Testis (tissue), 5 donors: ENCODE measurements at regions of chr7 and their contacts with region 1.

Region 1: GRCh38 chr7:51162724-51163329 is 153.8 kb downstream of the COBL start:
- DNase-seq: peak; percentile 93
- H3K4me3 ChIP-seq: no peak overlapping the region
- H3K27ac ChIP-seq: no peak overlapping the region
- H3K4me1 ChIP-seq: no peaks in the 10 kb centered on the region
- H3K27me3 ChIP-seq: no peaks in the 10 kb centered on the region
- CTCF ChIP-seq: peak; percentile 75 to 82 (median 75)
- POLR2A ChIP-seq: no peak

Region 2: DNA sequence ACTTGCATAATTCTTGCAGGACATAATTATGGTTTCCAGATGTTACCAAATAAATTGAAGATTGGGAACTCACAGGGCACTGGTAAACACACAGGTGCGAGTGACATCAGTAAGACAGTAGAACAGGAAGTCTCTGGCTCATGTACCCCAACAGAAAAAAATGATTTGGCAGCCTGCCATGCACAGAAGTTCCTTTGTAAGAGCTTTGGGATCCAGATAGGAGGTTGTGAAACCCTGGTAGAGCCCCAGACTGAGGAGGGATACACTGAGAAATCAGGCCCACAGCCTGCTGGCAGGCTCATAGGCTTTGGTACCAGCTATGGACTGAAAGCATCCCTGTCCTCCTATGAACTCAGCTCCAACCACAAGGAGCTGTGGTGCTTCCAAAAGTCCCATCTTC is 35.8 kb after region 1 on chr7:
- intact Hi-C with region 1: no loop called
- DNase-seq: no peak
- H3K4me3 ChIP-seq: no peak overlapping the region
- H3K27ac ChIP-seq: no peak overlapping the region
- H3K4me1 ChIP-seq: no peaks in the 10 kb centered on the region
- H3K27me3 ChIP-seq: no peaks in the 10 kb centered on the region
- CTCF ChIP-seq: no peak
- POLR2A ChIP-seq: no peak

Region 3: GRCh38 chr7:51308265-51308664 is 145.4 kb after region 1 on chr7:
- intact Hi-C with region 1: no loop called
- DNase-seq: no peak
- H3K4me3 ChIP-seq: no peak overlapping the region
- H3K27ac ChIP-seq: no peak overlapping the region
- H3K4me1 ChIP-seq: no peaks in the 10 kb centered on the region
- H3K27me3 ChIP-seq: no peaks in the 10 kb centered on the region
- CTCF ChIP-seq: no peak
- POLR2A ChIP-seq: no peak

Region 4: DNA sequence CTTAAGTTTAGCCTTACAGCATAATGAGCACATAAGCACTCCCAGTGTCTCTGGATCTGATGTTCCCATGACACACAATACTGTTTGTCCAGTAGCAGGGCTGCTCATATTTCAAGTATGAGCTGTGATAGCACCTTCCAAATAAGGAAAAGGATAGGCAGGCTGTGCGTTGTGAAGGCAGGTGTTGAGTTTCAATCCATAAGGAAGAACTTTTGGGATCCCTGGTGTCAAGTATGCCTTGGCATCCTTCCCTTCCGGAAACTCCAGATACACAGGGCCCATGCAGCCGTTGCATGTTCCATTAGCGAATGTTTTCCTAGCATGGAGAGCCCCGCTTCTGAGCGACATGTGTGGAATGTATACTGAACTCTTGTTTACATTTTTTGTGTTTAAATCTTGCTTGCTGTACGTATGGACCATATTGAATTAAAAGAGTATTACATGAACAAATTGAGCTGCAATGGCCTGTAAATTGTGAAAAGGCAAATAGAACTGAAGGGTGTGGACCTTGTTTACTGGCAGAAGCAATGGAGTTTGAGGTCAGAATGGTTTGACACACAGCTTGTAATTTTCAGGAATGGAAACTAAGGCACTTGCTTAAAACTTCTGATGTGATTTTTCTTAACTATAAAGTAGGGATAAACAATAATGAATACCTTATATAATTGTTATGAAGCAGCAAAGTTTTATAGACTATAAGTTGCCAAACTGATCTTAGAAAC is 187.5 kb after region 1 on chr7:
- intact Hi-C with region 1: no loop called
- DNase-seq: no peak
- H3K4me3 ChIP-seq: no peak overlapping the region
- H3K27ac ChIP-seq: no peak overlapping the region
- H3K4me1 ChIP-seq: no peaks in the 10 kb centered on the region
- H3K27me3 ChIP-seq: no peaks in the 10 kb centered on the region
- CTCF ChIP-seq: no peak
- POLR2A ChIP-seq: no peak

Region 5: DNA sequence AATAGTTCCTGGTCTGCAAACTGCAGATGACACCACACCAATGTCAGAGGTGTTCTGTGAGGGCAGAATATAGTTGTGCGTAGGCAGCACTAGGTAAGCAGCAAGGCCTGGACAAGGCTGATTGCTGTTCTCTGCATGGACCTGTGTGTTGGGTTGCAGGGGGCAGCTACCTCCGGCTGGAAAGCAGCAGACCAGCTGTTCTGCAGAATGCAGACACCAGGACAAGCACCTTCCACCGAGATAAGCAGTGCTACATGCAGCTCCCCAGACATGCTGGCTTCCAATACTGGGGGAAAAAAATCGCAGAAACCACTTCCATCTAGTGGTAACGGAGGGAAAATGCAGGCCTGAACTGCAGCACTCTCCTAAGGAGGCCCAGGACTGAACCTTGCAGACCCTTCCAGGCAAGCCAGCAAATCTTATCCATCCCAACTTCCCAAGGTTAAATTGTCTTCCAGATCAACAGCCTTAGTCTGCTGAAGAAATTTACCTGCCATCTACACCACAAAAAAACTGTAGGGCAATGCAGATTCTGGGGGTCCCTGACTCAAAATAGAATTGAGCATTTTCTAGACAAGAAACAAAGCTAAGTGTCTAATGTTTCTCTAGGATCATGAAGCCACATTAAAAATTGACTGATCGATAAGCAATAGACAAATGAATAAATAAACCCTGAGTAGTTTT is 204.2 kb after region 1 on chr7:
- intact Hi-C with region 1: loop called (anchors 10 kb)
- DNase-seq: peak; percentile 47
- H3K4me3 ChIP-seq: no peak overlapping the region
- H3K27ac ChIP-seq: no peak overlapping the region
- H3K4me1 ChIP-seq: no peaks in the 10 kb centered on the region
- H3K27me3 ChIP-seq: no peaks in the 10 kb centered on the region
- CTCF ChIP-seq: peak in 2 of 3 experiments; percentile 46 to 66
- POLR2A ChIP-seq: no peak